Psoas muscle (tissue), 8 donors: ENCODE measurements at regions of chr11 and their contacts with region 1.

Region 1: DNA sequence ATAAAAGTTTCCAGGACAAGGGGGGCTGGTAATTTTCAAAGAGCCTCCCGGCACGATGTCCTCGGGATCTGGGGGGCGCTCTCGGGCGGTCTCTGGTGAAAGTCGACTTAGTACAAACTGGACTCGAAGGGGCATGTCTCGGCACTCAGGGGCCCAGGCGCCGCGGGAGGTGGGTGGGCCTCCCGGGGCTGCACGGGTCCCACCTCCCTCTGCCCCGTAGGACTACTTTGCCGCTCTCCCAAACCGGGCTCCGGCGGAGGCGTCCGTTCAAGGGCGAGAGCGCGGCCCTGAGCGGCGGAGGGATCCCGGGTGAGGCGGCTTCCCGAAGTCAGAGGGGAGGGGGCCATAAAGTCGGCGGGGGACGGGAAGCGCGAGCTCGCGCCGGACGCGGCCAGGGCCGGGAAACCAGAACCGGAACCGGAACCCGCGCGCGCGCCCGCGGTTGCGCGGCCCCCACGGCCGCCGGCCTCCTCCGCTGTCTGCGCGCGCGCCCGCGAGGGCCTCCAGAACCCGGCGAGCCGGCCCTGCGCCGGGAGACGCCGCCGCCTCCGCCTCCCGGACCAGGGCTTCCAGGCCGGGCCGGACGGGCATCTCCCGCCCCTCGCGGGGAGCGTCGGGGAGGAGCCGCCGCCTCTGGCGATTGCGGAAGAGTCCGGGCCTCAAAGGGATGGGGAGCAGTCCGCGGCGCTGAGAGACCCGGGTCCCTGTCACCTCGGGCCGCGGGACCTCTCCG is at the start of gene ARHGEF12:
- DNase-seq: peak; percentile 98 to 99
- ATAC-seq: peak; percentile 83 to 89 (median 84)
- H3K4me3 ChIP-seq: peak within 1 kb of the TSS; percentile 96
- H3K27ac ChIP-seq: peak within 1 kb of the TSS; percentile 98
- H3K4me1 ChIP-seq: peaks cover 33% of the 10 kb centered on the region
- H3K27me3 ChIP-seq: no peaks in the 10 kb centered on the region
- CTCF ChIP-seq: peak; percentile 18
- total RNA-seq, gene ARHGEF12: 45.6 to 102 (median 76.1) TPM

Region 2: GRCh38 chr11:120385110-120385509 is 49.0 kb after region 1 on chr11:
- intact Hi-C with region 1: no loop called
- DNase-seq: no peak
- ATAC-seq: no peak
- H3K4me3 ChIP-seq: no peak overlapping the region
- H3K27ac ChIP-seq: no peak overlapping the region
- H3K4me1 ChIP-seq: peaks cover 74% of the 10 kb centered on the region
- H3K27me3 ChIP-seq: no peaks in the 10 kb centered on the region
- CTCF ChIP-seq: no peak

Region 3: GRCh38 chr11:120400564-120401364 is 64.7 kb after region 1 on chr11:
- intact Hi-C with region 1: loop called (anchors 2 to 5 kb)
- DNase-seq: no peak
- ATAC-seq: peak; percentile 90 to 96 (median 94)
- H3K4me3 ChIP-seq: peak overlapping the region; percentile 56
- H3K27ac ChIP-seq: peak overlapping the region; percentile 89
- H3K4me1 ChIP-seq: peaks cover 73% of the 10 kb centered on the region
- H3K27me3 ChIP-seq: no peaks in the 10 kb centered on the region
- CTCF ChIP-seq: no peak

Region 4: GRCh38 chr11:120432056-120433018 is 96.3 kb after region 1 on chr11:
- intact Hi-C with region 1: loop called (anchors 1 to 5 kb)
- DNase-seq: no peak
- ATAC-seq: peak; percentile 94 to 97 (median 96)
- H3K4me3 ChIP-seq: peak overlapping the region; percentile 33
- H3K27ac ChIP-seq: peak overlapping the region; percentile 82
- H3K4me1 ChIP-seq: peaks cover 23% of the 10 kb centered on the region
- H3K27me3 ChIP-seq: no peaks in the 10 kb centered on the region
- CTCF ChIP-seq: no peak